MCF 10A (cell line): ENCODE measurements at regions of chr1 and their contacts with region 1.

Region 1: DNA sequence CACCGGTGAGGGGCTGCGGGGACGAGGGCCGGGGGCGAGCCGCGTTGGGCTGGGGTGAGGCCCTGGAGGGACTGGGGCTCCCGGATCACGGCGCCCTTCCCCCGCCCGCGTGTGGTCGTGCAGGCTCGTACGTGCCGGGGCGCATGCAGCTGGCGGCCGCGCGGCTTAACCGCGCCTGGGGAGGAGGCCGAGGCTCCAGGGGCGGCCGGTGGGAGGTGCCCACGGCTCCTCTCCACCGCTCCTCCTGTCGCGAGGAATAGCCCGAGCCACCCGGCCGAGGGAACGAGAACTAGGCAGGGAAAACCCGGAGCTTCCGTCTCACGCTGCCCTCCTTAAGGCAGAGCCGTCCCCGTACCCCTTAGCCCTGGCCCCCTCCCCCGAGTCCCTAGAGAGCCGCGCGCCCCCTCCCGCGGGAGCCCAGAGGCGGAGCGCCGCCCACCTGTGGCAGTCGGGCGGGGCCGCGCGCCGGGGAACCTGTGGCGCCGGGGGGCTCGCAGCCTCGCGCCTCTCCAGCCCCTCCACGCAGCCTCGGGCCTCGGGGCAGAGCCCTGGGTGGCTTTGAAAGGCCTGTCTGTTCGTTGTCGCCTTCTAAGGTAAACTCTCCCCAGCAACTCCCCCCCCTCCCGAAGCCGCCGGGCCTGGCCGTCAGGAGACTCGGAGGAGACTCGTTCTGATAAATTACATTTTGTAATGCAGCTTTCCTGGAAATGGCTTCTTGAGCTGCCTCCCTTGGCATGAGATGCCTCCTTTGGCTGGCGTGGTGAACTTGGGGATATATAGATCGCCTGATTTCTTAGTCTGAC is 746 bp downstream of the AK4 start:
- DNase-seq: peak; percentile 58
- H3K4me3 Mint-ChIP-seq: peak overlapping the region; percentile 79
- H3K27ac Mint-ChIP-seq: peak overlapping the region; percentile 6
- H3K4me1 Mint-ChIP-seq: peaks cover 23% of the 10 kb centered on the region
- H3K27me3 Mint-ChIP-seq: no peaks in the 10 kb centered on the region
- CTCF ChIP-seq: no peak

Region 2: GRCh38 chr1:65009724-65010420 is 138.9 kb before region 1 on chr1:
- CTCF ChIA-PET with region 1: no interaction called
- POLR2A ChIA-PET with region 1: no interaction called
- intact Hi-C with region 1: no loop called
- DNase-seq: no peak
- H3K4me3 Mint-ChIP-seq: no peak overlapping the region
- H3K27ac Mint-ChIP-seq: no peak overlapping the region
- H3K4me1 Mint-ChIP-seq: no peaks in the 10 kb centered on the region
- H3K27me3 Mint-ChIP-seq: no peaks in the 10 kb centered on the region
- CTCF ChIP-seq: no peak

Region 3: GRCh38 chr1:65067491-65068201 is 81.1 kb before region 1 on chr1:
- CTCF ChIA-PET with region 1: interaction called, 8 read pairs
- POLR2A ChIA-PET with region 1: interaction called, 20 read pairs
- intact Hi-C with region 1: loop called (anchors 2 kb)
- DNase-seq: peak; percentile 70
- H3K4me3 Mint-ChIP-seq: peak overlapping the region; percentile 77
- H3K27ac Mint-ChIP-seq: peak overlapping the region; percentile 92
- H3K4me1 Mint-ChIP-seq: peaks cover 13% of the 10 kb centered on the region
- H3K27me3 Mint-ChIP-seq: no peaks in the 10 kb centered on the region
- CTCF ChIP-seq: no peak

Region 4: GRCh38 chr1:65114322-65114721 is 34.4 kb before region 1 on chr1:
- CTCF ChIA-PET with region 1: no interaction called
- POLR2A ChIA-PET with region 1: no interaction called
- intact Hi-C with region 1: no loop called
- DNase-seq: no peak
- H3K4me3 Mint-ChIP-seq: no peak overlapping the region
- H3K27ac Mint-ChIP-seq: no peak overlapping the region
- H3K4me1 Mint-ChIP-seq: no peaks in the 10 kb centered on the region
- H3K27me3 Mint-ChIP-seq: no peaks in the 10 kb centered on the region
- CTCF ChIP-seq: no peak

Region 5: GRCh38 chr1:65165269-65165993 is 16.7 kb after region 1 on chr1:
- CTCF ChIA-PET with region 1: interaction called, 4 read pairs
- POLR2A ChIA-PET with region 1: interaction called, 20 read pairs
- intact Hi-C with region 1: no loop called
- DNase-seq: no peak
- H3K4me3 Mint-ChIP-seq: no peak overlapping the region
- H3K27ac Mint-ChIP-seq: no peak overlapping the region
- H3K4me1 Mint-ChIP-seq: peaks cover 46% of the 10 kb centered on the region
- H3K27me3 Mint-ChIP-seq: no peaks in the 10 kb centered on the region
- CTCF ChIP-seq: no peak